Cardiac septum (tissue), 1 donor: ENCODE measurements at regions of chr3 and their contacts with region 1.

Region 1: GRCh38 chr3:141738022-141738890 is at the start of gene RNF7:
- DNase-seq: peak; percentile 97
- total RNA-seq, gene RNF7: 77.5 TPM

Region 2: GRCh38 chr3:141487521-141488252 is 250.6 kb before region 1 on chr3:
- intact Hi-C with region 1: loop called (anchors 2 kb)
- DNase-seq: peak; percentile 89

Region 3: GRCh38 chr3:141575879-141576743 is 162.1 kb before region 1 on chr3:
- intact Hi-C with region 1: loop called (anchors 2 kb)
- DNase-seq: no peak

Region 4: DNA sequence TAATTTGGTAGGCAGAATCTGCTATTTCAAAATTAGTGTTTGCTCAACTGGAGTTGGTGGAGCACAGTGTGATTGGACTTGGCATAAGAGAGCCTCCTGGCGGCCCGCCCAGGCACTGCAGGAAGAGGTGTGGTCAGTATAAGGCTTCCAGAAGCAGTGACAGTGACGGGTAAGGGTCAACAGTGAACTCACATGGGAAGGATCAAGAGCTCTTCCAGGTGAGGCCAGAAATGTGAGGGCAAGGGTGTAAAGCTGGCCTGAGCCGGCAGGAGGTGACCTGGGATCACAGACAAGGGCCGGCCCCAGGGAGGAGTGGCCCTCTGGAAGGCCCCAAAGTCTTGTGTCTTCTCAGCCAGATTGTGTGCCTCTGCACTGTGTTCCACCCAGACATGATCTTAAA is 93.3 kb before region 1 on chr3:
- intact Hi-C with region 1: loop called (anchors 5 kb)
- DNase-seq: peak; percentile 93

Region 5: DNA sequence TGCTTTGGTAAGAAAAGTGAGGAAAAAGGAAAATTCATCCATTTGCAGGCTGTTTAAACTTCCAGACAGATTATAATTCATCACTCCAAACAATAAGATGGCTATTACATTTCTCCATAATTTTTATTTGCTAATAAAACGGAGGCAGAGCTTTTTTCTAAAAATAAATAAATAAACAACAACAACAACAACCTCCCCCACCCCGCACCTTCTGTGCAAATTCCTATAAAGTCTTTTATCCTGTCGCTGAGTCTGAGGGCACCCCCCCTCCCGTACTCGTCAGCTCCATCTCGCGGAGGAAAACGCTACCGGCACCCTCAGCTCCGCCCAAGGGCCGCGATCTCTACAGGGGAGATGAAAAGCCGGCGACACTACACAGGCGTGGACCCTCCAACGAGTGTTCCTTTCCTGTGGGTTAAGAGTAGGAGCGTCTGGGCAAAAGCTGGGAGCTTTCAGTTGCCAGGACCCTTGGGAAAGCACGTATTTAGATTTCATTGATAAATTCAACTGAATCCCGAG is 137.2 kb after region 1 on chr3:
- intact Hi-C with region 1: loop called (anchors 1 kb)
- DNase-seq: peak; percentile 93

Region 6: DNA sequence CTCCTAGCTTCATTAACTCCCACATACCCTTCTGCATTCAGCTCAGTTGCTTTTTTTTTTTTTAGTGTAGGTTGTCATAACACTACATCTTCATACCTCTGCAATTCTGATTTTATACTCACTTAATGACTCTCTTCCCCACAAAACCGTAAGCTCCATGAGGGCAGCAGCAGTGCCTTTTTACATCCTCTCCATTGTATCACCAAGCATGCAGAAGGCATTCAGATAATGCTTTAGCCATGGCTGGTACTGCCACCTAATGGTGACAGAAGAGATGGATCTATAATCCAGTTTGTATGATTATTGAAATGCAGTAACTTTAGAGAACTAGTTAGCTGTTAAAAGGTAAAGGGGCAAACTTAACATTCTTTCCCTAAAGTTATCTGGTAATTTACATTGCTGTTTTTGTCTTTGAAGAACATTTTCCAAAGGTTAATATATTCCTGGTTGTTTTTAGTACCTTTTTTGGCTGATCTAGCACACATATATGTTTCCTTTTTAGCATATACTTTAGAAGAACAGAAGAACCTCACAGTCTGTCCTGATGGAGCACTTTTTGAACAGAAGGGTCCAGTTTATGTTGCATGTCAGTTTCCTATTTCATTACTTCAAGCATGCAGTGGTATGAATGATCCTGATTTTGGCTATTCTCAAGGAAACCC is 175.0 kb after region 1 on chr3:
- intact Hi-C with region 1: loop called (anchors 1 kb)
- DNase-seq: no peak